A549 (cell line): ENCODE measurements at regions of chr7 and their contacts with region 1.

Region 1: GRCh38 chr7:44735403-44736165 is 13.1 kb upstream of the ZMIZ2 start:
- DNase-seq: peak; percentile 65 to 89
- ATAC-seq: peak; percentile 86 to 90
- H3K4me3 ChIP-seq: no peak overlapping the region
- H3K27ac ChIP-seq: peak overlapping the region; percentile 58 to 85
- H3K4me1 ChIP-seq: peaks cover 27% of the 10 kb centered on the region
- CTCF ChIP-seq: no peak
- EP300 ChIP-seq: no peak
- POLR2A ChIP-seq: no peak
- RAD21 ChIP-seq: no peak

Region 2: DNA sequence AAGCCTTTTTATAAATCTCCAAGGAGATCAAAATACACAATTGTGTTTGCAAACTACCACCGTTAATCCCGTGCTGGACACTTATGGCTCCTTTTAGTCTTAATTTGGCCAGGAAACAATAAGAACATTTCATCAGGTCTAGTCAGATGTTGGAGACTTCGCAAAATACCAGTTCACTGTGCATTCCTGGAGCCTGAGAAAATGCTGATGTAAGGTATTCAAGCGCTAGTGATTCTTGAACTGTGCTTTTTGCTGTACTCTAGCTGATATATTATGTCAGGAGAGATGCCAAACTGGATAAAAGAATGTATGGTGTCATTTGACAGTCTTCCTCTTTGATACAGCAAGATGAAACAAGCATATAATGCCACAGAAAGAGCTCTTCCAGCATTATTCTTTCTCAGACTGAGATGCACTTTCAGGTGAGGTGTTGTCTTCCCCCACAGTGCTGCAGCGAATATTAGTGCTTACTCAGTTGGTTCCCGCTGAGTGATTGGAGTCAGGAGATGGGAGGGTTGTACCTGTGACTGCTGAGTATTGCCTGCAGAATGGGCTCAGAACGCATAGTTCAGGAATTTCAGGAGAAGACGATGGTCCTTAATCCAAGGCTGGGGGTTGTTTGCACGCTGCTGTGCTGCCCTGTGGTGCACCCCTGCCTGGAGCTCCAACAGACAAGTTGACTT is 69.9 kb before region 1 on chr7:
- CTCF ChIA-PET with region 1: no interaction called
- POLR2A ChIA-PET with region 1: no interaction called
- DNase-seq: no peak
- ATAC-seq: no peak
- H3K4me3 ChIP-seq: no peak overlapping the region
- H3K27ac ChIP-seq: no peak overlapping the region
- H3K4me1 ChIP-seq: no peaks in the 10 kb centered on the region
- CTCF ChIP-seq: no peak
- EP300 ChIP-seq: no peak
- POLR2A ChIP-seq: no peak
- RAD21 ChIP-seq: no peak

Region 3: DNA sequence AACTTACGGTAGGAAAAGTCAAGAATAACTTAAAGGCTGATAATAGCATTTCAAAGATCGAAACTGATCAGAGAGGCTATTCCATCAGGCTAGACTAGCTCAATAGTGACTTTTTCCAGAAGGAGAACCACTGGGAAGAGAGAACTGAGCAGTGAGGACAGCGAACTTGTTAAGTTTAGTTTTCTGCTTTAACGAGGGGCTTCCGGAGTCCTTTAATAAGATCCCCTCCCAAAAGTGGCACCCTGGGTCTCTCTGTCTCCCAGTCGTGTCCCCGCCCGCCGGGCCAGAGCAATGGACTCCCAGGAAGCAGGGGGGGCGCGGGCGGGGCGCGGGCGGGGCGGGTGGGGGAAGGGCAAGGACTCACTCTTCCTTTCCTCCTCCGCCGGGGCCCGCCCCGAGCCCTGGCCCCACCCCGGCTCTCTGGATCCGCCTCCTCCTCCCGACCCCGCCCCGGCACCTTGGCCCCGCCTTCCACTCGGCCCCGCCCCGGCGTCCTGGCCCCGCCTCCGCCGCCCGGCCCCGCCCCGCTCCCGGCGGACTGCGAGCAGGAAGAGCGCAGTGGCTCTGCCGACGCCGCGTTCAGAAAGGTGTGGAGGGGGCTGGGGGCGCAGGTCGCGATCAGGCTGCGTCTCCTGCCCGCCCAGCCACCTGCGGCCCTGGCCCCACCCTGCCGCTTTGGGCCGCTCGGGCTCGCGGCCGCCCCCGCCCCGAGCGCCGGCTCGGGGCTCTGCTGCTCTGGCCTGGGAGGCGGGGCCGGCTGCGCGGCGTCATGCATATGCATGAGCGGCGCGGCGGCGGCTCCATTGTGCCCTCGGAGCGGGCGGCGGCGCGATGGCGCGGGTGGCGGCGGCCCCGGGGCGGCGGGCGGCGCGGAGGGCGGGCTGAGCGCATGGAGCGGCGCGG is 12.7 kb after region 1 on chr7 and contains the start of gene ZMIZ2:
- CTCF ChIA-PET with region 1: interaction called, 11 read pairs
- POLR2A ChIA-PET with region 1: interaction called, 5 read pairs
- DNase-seq: peak; percentile 80 to 88
- ATAC-seq: peak; percentile 89 to 91
- H3K4me3 ChIP-seq: peak within 1 kb of the TSS; percentile 98
- H3K27ac ChIP-seq: peak within 1 kb of the TSS; percentile 95 to 98
- H3K4me1 ChIP-seq: peaks cover 26% of the 10 kb centered on the region
- CTCF ChIP-seq: no peak
- EP300 ChIP-seq: no peak; a peak in 1 of 5 replicates
- POLR2A ChIP-seq: peak; percentile 52
- RAD21 ChIP-seq: 0 out of 5 replicates have a peak, but pooled peaks of 1 of the 2 experiments have one; percentile 16
- polyA plus RNA-seq, gene ZMIZ2: 4.3 and 6.9 TPM in 2 replicates

Region 4: GRCh38 chr7:45278763-45279398 is 543.3 kb after region 1 on chr7:
- CTCF ChIA-PET with region 1: no interaction called
- POLR2A ChIA-PET with region 1: no interaction called
- DNase-seq: no peak
- ATAC-seq: no peak
- H3K4me3 ChIP-seq: no peak overlapping the region
- H3K27ac ChIP-seq: no peak overlapping the region
- H3K4me1 ChIP-seq: no peaks in the 10 kb centered on the region
- CTCF ChIP-seq: no peak
- EP300 ChIP-seq: no peak
- POLR2A ChIP-seq: no peak
- RAD21 ChIP-seq: no peak